ENCODE measurements at regions of chr5 and their contacts with region 1.

Region 1: GRCh38 chr5:144191998-144192397 is 21.3 kb downstream of the KCTD16 start:
- DNase-seq: peak; percentile 48
- H3K4me3 Mint-ChIP-seq: no peak overlapping the region
- H3K27ac Mint-ChIP-seq: no peak overlapping the region
- H3K4me1 Mint-ChIP-seq: peaks cover 21% of the 10 kb centered on the region
- H3K27me3 Mint-ChIP-seq: peaks cover 8% of the 10 kb centered on the region

Region 2: GRCh38 chr5:142713121-142713706 is 1478.8 kb before region 1 on chr5:
- intact Hi-C with region 1: loop called (anchors 5 kb)
- DNase-seq: peak; percentile 75
- H3K4me3 Mint-ChIP-seq: peak overlapping the region; percentile 71
- H3K27ac Mint-ChIP-seq: no peak overlapping the region
- H3K4me1 Mint-ChIP-seq: peaks cover 13% of the 10 kb centered on the region
- H3K27me3 Mint-ChIP-seq: peaks cover 11% of the 10 kb centered on the region

Region 3: DNA sequence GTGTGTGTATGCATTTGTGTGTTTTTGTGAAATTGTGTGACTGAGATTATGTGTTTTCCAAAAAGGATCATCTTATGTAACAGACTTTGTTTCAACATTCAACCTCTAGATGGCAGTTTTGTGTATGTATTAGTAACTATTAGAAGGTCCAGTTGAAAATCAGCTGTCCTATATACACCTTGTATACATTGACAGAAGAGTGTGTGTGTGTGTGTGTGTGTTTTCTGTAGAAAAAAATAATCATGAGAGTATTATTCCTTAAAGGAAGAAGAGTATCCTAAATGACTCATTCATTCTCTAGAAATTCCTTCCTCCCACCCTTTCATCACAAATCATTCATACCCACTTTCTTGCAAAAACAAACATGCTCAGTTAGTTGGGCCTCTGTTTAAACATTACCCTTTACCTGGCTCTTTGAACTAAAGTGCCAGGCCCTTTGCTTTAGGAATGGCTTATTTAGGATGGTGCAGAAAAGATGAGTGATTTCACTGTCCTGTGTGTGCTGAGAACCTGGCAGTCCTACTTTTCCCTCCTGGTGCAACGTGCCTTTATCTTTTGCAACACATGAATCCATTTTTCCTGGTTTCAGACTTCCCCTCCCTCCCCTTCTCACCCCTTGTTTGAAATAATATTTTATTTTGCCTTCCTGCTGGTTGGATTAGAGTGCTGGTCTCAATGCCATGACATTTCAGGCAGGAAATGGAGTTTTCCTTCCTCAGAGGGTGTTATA is 1269.6 kb before region 1 on chr5:
- intact Hi-C with region 1: loop called (anchors 5 kb)
- DNase-seq: no peak
- H3K4me3 Mint-ChIP-seq: no peak overlapping the region
- H3K27ac Mint-ChIP-seq: no peak overlapping the region
- H3K4me1 Mint-ChIP-seq: peaks cover 49% of the 10 kb centered on the region
- H3K27me3 Mint-ChIP-seq: no peaks in the 10 kb centered on the region

Region 4: GRCh38 chr5:143106174-143106573 is 1085.8 kb before region 1 on chr5:
- intact Hi-C with region 1: loop called (anchors 10 kb)
- DNase-seq: no peak
- H3K4me3 Mint-ChIP-seq: no peak overlapping the region
- H3K27ac Mint-ChIP-seq: peak overlapping the region; percentile 57
- H3K4me1 Mint-ChIP-seq: peaks cover 46% of the 10 kb centered on the region
- H3K27me3 Mint-ChIP-seq: no peaks in the 10 kb centered on the region

Region 5: DNA sequence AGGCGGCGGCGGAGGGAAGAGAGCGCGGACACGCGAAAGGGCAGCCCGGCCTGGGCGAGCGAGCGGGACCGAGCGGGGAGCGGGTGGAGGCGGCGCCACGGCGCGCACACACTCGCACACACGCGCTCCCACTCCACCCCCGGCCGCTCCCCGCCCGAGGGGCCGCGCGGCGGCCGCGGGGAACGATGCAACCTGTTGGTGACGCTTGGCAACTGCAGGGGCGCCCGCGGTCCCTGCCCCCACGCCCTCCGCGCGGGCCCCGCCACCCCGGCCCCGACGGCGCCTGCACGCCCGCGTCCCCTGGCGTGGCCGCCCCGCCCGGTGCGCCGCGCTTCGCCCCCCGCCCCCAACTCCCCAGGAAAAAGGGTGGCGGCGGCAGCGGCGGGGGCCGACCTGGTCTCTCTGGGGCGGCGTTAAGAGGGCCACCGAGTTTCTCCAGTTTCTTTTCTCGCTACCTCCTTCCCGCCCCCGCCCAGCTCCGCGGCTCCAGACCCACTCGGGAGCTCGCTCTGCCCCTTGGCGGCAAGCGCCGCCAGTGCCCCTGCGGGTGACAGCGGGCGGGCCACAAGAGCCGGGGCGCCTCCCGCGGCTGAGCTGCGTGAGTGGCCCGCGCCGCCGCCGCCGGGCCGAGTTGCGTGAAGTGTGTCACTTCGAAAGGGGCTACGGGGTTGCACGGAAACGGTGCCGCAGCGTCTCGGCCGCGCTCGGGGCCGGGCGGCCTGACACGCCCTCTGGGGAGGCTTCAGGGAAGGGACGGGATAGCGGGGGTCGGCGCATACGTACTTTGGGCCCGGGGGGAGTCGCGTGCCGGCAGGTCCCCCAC is 788.2 kb before region 1 on chr5 and contains the start of gene NR3C1:
- intact Hi-C with region 1: loop called (anchors 1 kb)
- DNase-seq: peak; percentile 82
- H3K4me3 Mint-ChIP-seq: peak within 1 kb of the TSS; percentile 95
- H3K27ac Mint-ChIP-seq: peak within 1 kb of the TSS; percentile 99
- H3K4me1 Mint-ChIP-seq: peaks cover 48% of the 10 kb centered on the region
- H3K27me3 Mint-ChIP-seq: no peaks in the 10 kb centered on the region
- total RNA-seq, gene NR3C1: 62.7 TPM in 2 replicates

Region 6: DNA sequence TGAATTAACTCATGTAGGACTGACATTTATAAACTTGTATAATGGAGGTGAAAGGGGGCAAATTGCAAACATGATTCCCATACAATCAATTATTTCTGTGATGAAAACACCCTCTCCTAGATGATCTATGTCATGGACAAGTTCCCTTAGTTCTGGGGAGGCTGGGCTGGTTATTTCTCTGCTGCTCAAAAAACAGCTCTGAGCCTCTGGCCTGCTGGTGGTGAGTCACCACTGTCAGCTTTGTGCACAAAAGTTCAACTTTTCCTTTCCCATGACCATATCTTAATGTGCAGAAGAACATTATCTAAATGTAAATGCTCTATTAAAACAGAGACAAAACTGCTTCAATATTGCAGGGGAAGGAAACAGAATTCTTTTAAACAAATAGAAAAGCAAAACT is 295.0 kb before region 1 on chr5:
- intact Hi-C with region 1: loop called (anchors 5 kb)
- DNase-seq: no peak
- H3K4me3 Mint-ChIP-seq: no peak overlapping the region
- H3K27ac Mint-ChIP-seq: peak overlapping the region; percentile 50
- H3K4me1 Mint-ChIP-seq: peaks cover 34% of the 10 kb centered on the region
- H3K27me3 Mint-ChIP-seq: no peaks in the 10 kb centered on the region

Region 7: GRCh38 chr5:144778561-144778960 is 586.6 kb after region 1 on chr5:
- intact Hi-C with region 1: no loop called
- DNase-seq: no peak
- H3K4me3 Mint-ChIP-seq: no peak overlapping the region
- H3K27ac Mint-ChIP-seq: no peak overlapping the region
- H3K4me1 Mint-ChIP-seq: no peaks in the 10 kb centered on the region
- H3K27me3 Mint-ChIP-seq: no peaks in the 10 kb centered on the region

Region 8: DNA sequence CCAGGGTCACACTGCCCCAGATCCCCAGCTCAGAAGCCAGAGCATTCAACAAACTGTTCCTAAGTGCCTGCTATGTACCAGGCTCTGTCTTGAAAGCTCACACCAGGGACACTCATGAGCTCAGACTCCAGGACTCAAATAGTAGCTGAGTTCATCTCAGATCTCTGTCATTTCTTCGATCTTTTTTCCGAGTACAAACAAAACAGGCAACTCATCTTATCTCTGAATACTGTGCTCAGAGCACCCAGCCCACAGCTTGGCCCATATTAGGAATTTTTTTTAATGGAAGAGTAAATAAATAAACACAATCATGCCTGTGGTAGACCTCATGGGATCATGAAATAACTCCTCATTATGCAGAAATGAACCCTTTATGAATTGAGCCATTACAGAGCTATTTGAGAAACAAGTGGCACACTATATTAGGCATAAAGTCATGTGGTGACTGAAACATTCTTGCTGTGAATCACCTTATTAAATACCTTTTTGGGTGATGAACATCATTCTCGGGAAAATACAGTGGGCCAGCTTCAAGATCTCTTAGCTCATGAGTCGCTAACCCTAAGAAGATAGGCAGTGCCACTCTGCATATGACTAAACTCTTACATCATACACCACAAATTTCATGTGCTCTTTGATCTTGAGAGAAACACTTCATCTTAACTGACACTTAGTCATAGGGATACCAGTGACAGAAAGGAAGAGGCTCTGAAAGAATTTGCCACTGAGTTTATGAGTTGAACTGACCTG is 1754.3 kb after region 1 on chr5:
- intact Hi-C with region 1: loop called (anchors 5 kb)
- DNase-seq: peak; percentile 19
- H3K4me3 Mint-ChIP-seq: peak overlapping the region; percentile 5
- H3K27ac Mint-ChIP-seq: peak overlapping the region; percentile 73
- H3K4me1 Mint-ChIP-seq: peaks cover 44% of the 10 kb centered on the region
- H3K27me3 Mint-ChIP-seq: peaks cover 36% of the 10 kb centered on the region